ENCODE measurements at regions of chr14 and their contacts with region 1.

Region 1: DNA sequence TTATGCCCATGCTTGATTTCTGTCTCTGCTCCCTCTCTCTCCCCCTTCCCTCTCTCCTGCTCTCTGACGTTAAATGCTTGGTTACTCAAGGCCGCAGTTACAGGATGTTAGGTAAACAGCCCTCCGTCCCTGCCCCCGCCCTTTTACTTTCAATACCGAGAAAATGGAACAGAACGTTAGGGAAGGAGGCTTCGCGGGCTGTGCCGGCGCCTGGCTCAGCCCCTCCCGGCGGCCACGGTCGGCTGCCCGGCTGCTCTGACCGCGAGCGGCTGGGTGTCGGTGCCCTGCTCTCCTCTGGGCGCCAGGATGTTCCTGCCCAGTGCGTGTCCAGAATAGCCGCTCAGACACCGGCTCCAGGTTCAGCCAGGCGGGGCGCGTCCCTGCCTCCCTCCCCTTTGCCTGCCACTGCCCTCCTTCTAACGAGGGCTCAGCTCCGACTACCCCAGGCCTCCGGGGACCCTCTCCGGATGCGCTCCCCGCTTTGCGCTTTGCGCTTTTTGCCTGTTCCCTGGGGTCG is 166.1 kb downstream of the ADCK1 start:
- DNase-seq: peak; percentile 20 to 27 (median 22)
- ATAC-seq: peak; percentile 63
- H3K4me3 ChIP-seq: no peak overlapping the region
- H3K27ac ChIP-seq: peak overlapping the region; percentile 3; the same call in 1 of the 3 replicates
- H3K4me1 ChIP-seq: peaks cover 11 to 17% of the 10 kb centered on the region in 2 experiments; a peak in 4 of 5 replicates
- H3K27me3 ChIP-seq: no peaks in the 10 kb centered on the region
- CTCF ChIP-seq: no peak
- EP300 ChIP-seq: no peak
- POLR2A ChIP-seq: no peak
- RAD21 ChIP-seq: no peak

Region 2: DNA sequence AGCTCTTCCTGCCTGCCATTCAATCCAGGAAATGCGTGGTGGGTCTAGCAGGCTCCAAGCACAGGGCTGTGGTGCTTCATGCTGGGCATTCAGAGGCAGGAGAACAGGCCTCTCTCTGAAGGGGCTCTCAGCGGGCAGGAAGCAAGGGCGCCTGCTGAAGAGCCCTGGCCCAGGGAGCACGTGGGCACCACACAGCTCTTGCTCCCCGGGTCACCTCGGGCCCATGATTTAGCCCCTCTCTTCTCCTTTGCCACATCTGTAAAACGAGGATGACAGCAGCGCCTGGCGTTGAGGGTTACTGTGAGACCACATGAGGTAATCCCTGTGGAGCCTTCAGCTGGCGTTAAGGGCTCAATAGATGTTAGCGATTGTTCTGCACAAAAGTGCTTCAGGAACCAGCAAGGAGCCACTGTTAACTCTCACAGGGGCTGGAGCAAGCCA is 312.0 kb before region 1 on chr14:
- CTCF ChIA-PET with region 1: no interaction called
- POLR2A ChIA-PET with region 1: no interaction called
- in situ Hi-C with region 1: no loop called
- intact Hi-C with region 1: loop called (anchors 10 kb)
- DNase-seq: no peak
- ATAC-seq: no peak; the same call in 2 of the 3 replicates
- H3K4me3 ChIP-seq: no peak overlapping the region
- H3K27ac ChIP-seq: no peak overlapping the region
- H3K4me1 ChIP-seq: peaks cover 0 to 4% of the 10 kb centered on the region in 2 experiments; a peak in 4 of 5 replicates
- H3K27me3 ChIP-seq: no peaks in the 10 kb centered on the region
- CTCF ChIP-seq: no peak
- EP300 ChIP-seq: no peak
- POLR2A ChIP-seq: no peak
- RAD21 ChIP-seq: no peak

Region 3: DNA sequence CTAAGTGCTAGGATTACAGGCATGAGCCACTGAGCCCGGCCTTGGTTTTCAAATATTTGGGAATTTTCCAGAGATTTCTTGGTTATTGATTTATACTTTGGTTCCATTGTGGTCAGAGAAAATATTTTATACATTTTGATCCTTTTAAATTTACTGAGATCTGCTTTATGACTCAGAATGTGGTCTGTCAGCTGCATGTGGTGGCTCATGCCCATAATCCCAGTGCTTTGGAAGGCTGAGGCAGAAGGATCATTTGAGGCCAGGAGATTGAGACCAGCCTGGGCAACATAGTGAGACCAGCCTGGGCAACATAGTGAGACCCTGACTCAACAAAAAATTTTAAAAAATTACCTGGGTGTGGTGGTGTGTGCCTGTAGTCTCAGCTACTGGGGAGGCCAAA is 116.3 kb before region 1 on chr14:
- CTCF ChIA-PET with region 1: no interaction called
- POLR2A ChIA-PET with region 1: no interaction called
- in situ Hi-C with region 1: no loop called
- intact Hi-C with region 1: no loop called
- DNase-seq: no peak
- ATAC-seq: no peak
- H3K4me3 ChIP-seq: no peak overlapping the region
- H3K27ac ChIP-seq: no peak overlapping the region
- H3K4me1 ChIP-seq: no peaks in the 10 kb centered on the region; a peak in 1 of 5 replicates
- H3K27me3 ChIP-seq: no peaks in the 10 kb centered on the region
- CTCF ChIP-seq: no peak
- EP300 ChIP-seq: no peak
- POLR2A ChIP-seq: no peak
- RAD21 ChIP-seq: no peak

Region 4: GRCh38 chr14:77868552-77869285 is 97.3 kb before region 1 on chr14:
- CTCF ChIA-PET with region 1: no interaction called
- POLR2A ChIA-PET with region 1: no interaction called
- in situ Hi-C with region 1: loop called (anchors 5 kb)
- intact Hi-C with region 1: no loop called
- DNase-seq: no peak
- ATAC-seq: no peak
- H3K4me3 ChIP-seq: no peak overlapping the region
- H3K27ac ChIP-seq: no peak overlapping the region
- H3K4me1 ChIP-seq: peaks cover 11 to 13% of the 10 kb centered on the region in 2 experiments
- H3K27me3 ChIP-seq: no peaks in the 10 kb centered on the region
- CTCF ChIP-seq: no peak
- EP300 ChIP-seq: no peak
- POLR2A ChIP-seq: no peak
- RAD21 ChIP-seq: no peak

Region 5: GRCh38 chr14:77947372-77947771 is 18.6 kb before region 1 on chr14:
- CTCF ChIA-PET with region 1: no interaction called
- POLR2A ChIA-PET with region 1: no interaction called
- in situ Hi-C with region 1: no loop called
- intact Hi-C with region 1: no loop called
- DNase-seq: no peak
- ATAC-seq: no peak
- H3K4me3 ChIP-seq: no peak overlapping the region
- H3K27ac ChIP-seq: no peak overlapping the region
- H3K4me1 ChIP-seq: no peaks in the 10 kb centered on the region; a peak in 1 of 5 replicates
- H3K27me3 ChIP-seq: no peaks in the 10 kb centered on the region
- CTCF ChIP-seq: no peak
- EP300 ChIP-seq: no peak
- POLR2A ChIP-seq: no peak
- RAD21 ChIP-seq: no peak

Measured in K562 (cell line).